WTC11 (cell line): ENCODE measurements at regions of chr16 and their contacts with region 1.

Region 1: GRCh38 chr16:30571695-30572600 is at the start of gene ZNF688:
- DNase-seq: peak; percentile 93
- ATAC-seq: peak; percentile 87
- H3K4me3 Mint-ChIP-seq: peak within 1 kb of the TSS; percentile 91
- H3K27ac Mint-ChIP-seq: peak within 1 kb of the TSS; percentile 67
- H3K4me1 Mint-ChIP-seq: peaks cover 15% of the 10 kb centered on the region
- H3K27me3 Mint-ChIP-seq: no peaks in the 10 kb centered on the region; the same call in 1 of the 2 replicates
- CTCF ChIP-seq: no peak
- total RNA-seq, gene ZNF688: 4.2 to 6.0 TPM (median 4.9 TPM) in 3 replicates

Region 2: GRCh38 chr16:30491744-30492308 is 80.1 kb before region 1 on chr16:
- CTCF ChIA-PET with region 1: no interaction called
- POLR2A ChIA-PET with region 1: no interaction called
- DNase-seq: no peak
- ATAC-seq: no peak
- H3K4me3 Mint-ChIP-seq: no peak overlapping the region
- H3K27ac Mint-ChIP-seq: no peak overlapping the region
- H3K4me1 Mint-ChIP-seq: peaks cover 14% of the 10 kb centered on the region
- H3K27me3 Mint-ChIP-seq: peaks cover 9% of the 10 kb centered on the region; the same call in 1 of the 2 replicates
- CTCF ChIP-seq: no peak

Region 3: DNA sequence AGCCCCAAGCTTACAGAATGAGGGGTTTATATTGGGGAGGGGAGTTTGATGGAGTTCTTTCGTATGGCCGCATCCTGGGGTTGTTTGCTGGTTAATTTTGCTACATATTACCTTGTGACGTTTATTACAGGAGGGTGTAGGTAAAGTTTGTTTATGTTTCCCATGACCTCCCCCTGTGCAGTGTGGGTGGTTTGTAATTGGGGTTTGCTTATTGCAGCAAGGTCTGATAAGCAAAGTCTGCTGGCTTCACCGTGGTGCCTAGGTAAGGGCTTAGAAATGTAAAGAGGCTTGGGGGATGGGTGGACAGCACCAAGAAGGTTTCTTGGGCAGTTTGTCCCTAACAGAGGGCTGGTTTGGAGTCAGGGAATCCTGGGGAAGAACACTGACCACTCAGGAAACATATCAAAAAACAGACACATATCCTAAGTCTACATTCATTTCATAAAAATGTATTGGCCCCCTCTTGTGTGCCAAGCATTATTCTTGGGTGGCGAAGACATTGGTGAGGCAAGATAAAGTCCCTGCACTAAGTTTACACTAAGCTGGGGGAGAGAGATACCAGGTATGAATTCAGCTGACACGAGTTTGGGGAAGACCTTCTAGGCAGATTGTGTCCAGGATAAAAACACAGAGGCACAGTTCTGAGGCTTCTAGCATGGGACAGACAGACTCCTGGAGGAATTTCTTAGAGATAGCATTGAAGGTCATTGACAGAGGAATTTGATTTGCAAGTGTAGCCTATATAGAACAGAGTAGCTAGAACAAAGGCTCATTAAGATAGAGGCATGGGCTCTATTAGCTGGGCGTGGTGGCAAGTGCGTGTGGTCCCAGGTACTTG is 23.3 kb before region 1 on chr16:
- CTCF ChIA-PET with region 1: no interaction called
- POLR2A ChIA-PET with region 1: no interaction called
- DNase-seq: no peak
- ATAC-seq: no peak
- H3K4me3 Mint-ChIP-seq: no peak overlapping the region; the same call in 1 of the 2 replicates
- H3K27ac Mint-ChIP-seq: no peak overlapping the region; the same call in 1 of the 2 replicates
- H3K4me1 Mint-ChIP-seq: peaks cover 20% of the 10 kb centered on the region
- H3K27me3 Mint-ChIP-seq: no peaks in the 10 kb centered on the region
- CTCF ChIP-seq: no peak

Region 4: GRCh38 chr16:30585400-30586189 is 13.6 kb after region 1 on chr16 and contains the start of gene ZNF785:
- CTCF ChIA-PET with region 1: interaction called, 9 read pairs
- POLR2A ChIA-PET with region 1: interaction called, 10 read pairs
- DNase-seq: peak; percentile 96
- ATAC-seq: peak; percentile 91
- H3K4me3 Mint-ChIP-seq: peak within 1 kb of the TSS; percentile 89
- H3K27ac Mint-ChIP-seq: peak within 1 kb of the TSS; percentile 97
- H3K4me1 Mint-ChIP-seq: peaks cover 10% of the 10 kb centered on the region; the same call in 1 of the 2 replicates
- H3K27me3 Mint-ChIP-seq: no peaks in the 10 kb centered on the region
- CTCF ChIP-seq: no peak
- total RNA-seq, gene ZNF785: 15.4 to 16.5 TPM (median 16.0 TPM) in 3 replicates

Region 5: DNA sequence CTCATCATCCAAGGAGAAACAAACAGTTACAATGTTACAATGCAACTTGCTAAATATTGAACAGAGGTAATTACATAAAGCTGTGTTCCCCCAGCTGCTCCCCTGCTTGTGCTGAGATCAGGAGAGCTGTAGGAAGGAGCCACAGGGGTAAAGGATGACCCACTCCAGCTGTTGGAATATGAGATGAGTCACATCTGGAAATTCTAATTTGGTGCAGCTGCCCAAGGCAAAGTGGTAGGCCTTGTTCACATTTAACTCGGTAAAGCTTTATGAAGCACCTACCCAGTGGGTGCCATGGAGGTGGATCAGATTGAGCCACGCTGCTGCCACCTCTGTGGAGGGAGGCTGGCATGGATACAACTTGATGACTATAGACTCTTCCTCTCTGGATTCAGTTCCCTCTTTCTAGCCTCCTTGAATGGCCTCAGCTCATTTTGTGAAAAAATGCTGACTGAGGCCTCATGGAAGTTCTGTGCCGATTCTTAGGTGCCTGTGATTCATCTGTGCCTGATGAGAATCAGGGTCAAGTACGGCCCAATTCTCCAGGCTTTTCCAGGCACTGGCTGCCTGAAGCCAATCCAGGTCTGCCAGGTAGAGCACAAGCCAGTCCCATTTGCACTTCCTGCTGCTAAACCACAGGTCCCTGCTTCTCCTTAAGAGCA is 30.8 kb after region 1 on chr16:
- CTCF ChIA-PET with region 1: interaction called, 20 read pairs
- POLR2A ChIA-PET with region 1: no interaction called
- DNase-seq: no peak
- ATAC-seq: no peak
- H3K4me3 Mint-ChIP-seq: no peak overlapping the region
- H3K27ac Mint-ChIP-seq: peak overlapping the region; percentile 57; the same call in 1 of the 2 replicates
- H3K4me1 Mint-ChIP-seq: no peaks in the 10 kb centered on the region
- H3K27me3 Mint-ChIP-seq: no peaks in the 10 kb centered on the region
- CTCF ChIP-seq: no peak

Region 6: DNA sequence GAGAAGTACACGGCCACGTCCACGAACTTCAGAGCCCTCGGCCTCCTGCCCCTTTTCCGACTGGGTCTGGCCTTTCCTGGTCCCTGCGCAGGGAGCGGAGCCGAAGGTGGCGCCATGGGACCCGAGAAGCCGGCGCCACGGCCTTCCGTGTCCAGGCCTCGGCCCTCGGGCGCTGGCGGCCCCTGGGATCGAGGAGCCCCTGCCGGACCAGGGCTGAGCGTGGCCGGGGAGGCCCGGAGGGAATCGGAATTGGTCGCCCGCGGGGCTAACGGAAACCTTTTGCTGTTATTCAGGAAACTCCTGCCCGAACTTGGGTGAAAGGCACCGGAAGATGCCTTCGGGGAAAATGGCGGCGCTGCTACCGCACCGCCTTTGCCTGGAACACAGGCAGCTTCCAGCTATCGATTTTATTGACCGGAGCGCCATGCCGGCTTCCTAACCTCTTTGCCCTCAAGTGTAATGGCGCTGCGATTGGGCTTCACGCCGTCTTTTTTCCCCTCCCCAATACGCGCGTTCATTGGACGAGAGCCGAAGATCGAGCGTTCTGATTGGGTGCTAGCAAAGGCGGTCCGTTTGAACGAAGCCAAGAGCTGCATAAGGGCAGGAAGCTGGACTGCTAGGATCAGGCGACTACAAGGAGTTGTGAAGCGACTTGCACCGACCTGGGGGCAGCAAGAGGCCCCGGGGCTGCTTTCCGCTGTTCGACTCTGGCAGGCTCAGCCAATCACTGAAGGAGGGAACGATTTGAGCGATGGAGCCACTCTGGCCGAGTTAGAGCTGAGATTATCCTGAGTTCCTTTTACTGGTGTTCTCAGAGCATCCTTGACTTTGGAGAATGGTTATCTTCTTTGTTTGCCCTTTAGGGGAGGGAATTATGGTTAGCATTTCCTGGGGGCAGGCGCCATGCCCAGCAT is 38.2 kb after region 1 on chr16 and contains the start of gene ZNF689:
- CTCF ChIA-PET with region 1: interaction called, 21 read pairs
- POLR2A ChIA-PET with region 1: interaction called, 14 read pairs
- DNase-seq: peak; percentile 96
- ATAC-seq: peak; percentile 93
- H3K4me3 Mint-ChIP-seq: peak within 1 kb of the TSS; percentile 84
- H3K27ac Mint-ChIP-seq: peak within 1 kb of the TSS; percentile 97
- H3K4me1 Mint-ChIP-seq: peaks cover 3% of the 10 kb centered on the region; the same call in 1 of the 2 replicates
- H3K27me3 Mint-ChIP-seq: no peaks in the 10 kb centered on the region; the same call in 1 of the 2 replicates
- CTCF ChIP-seq: no peak
- total RNA-seq, gene ZNF689: 13.2 to 16.3 TPM (median 15.9 TPM) in 3 replicates

Region 7: DNA sequence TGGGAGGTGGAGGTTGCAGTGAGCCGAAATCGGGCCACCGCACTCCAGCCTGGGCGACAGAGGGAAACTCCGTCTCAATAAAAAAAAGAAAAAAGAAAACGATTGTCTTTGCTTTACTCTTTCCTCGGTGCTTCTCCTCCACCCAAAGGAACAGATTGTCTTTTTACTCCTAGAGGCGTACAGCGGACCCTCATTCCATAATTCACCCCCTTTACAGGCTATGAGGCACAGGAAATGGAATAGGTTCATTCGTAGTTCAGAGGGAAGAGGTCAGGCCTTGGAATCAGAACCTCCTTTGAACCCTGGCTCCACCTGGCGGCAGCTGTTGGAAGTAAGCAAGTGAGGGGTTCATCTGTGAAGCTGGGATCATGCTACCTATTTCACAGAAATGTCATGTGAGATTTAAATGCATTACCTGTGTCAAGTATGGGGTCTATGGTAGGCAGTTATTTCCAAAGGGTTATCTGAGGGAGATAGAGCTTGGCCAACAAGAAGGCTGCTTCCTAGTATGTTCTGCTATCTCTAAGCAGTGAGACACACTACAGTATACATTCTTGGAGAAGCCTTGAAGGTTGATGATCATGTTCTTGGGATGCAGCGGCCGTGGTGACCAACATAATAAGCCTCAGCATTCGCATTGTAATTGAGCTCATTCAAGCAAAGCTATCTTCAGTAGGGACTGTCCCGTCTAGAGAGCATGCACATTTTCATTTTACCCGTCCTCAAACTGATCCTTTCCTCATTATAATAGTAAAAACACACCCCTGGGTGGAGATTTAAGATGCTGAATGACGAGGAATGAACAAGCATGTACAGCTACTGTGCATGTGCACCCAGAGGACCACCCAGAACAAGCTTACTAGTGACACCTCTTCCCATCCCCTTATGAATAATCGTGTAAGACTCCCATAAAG is 56.9 kb after region 1 on chr16:
- CTCF ChIA-PET with region 1: interaction called, 10 read pairs
- POLR2A ChIA-PET with region 1: interaction called, 3 read pairs
- DNase-seq: peak; percentile 94
- ATAC-seq: peak; percentile 95
- H3K4me3 Mint-ChIP-seq: no peak overlapping the region
- H3K27ac Mint-ChIP-seq: no peak overlapping the region
- H3K4me1 Mint-ChIP-seq: 0 out of 2 replicates have a peak, but pooled peaks cover 2% of the 10 kb centered on the region
- H3K27me3 Mint-ChIP-seq: peaks cover 23% of the 10 kb centered on the region
- CTCF ChIP-seq: peak; percentile 71

Region 8: DNA sequence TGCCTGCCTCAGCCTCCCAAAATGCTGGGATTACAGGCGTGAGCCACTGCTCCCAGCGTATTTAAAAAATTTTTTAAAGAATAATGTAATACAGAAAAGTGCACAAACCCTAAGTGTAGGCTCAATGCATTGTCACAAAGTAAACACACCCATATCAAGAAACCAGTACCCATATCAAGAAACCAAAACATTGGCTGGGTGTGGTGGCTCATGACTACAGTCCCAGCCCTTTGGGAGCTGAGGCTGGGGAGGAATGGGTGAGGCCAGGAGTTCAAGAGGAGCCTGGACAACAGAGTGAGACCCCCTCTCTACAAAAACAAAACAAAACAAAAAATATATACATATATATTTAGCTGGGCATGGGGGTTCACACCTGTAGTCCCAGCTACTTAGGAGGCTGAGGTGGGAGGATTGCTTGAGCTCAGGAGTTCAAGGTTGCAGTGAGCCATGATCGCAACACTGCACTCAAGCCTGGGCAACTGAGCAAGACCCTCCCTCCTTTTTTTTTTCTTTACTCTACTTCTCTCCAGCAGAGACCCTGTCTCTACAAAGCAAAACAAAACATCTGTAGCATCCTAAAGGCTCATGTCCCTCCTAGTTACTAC is 69.5 kb after region 1 on chr16:
- CTCF ChIA-PET with region 1: no interaction called
- POLR2A ChIA-PET with region 1: no interaction called
- DNase-seq: no peak
- ATAC-seq: no peak
- H3K4me3 Mint-ChIP-seq: no peak overlapping the region
- H3K27ac Mint-ChIP-seq: no peak overlapping the region
- H3K4me1 Mint-ChIP-seq: no peaks in the 10 kb centered on the region
- H3K27me3 Mint-ChIP-seq: peaks cover 24% of the 10 kb centered on the region
- CTCF ChIP-seq: no peak